ENCODE measurements at regions of chr14 and their contacts with region 1.

Region 1: GRCh38 chr14:90235179-90235976 is 21.0 kb upstream of the PSMC1 start:
- DNase-seq: peak; percentile 80
- H3K4me3 ChIP-seq: no peak overlapping the region
- H3K27ac ChIP-seq: no peak overlapping the region
- H3K4me1 ChIP-seq: no peaks in the 10 kb centered on the region
- H3K27me3 ChIP-seq: peaks cover 3 to 4% of the 10 kb centered on the region in 2 experiments
- CTCF ChIP-seq: peak; percentile 84 to 89
- POLR2A ChIP-seq: no peak

Region 2: GRCh38 chr14:89027097-89027740 is 1208.2 kb before region 1 on chr14:
- CTCF ChIA-PET with region 1: interaction called, 3 read pairs
- POLR2A ChIA-PET with region 1: no interaction called
- dilution Hi-C with region 1: no loop called
- intact Hi-C with region 1: loop called (anchors 2 kb)
- DNase-seq: peak; percentile 25
- H3K4me3 ChIP-seq: peak overlapping the region; percentile 40 to 65 (median 56)
- H3K27ac ChIP-seq: no peak overlapping the region
- H3K4me1 ChIP-seq: peaks cover 9% of the 10 kb centered on the region
- H3K27me3 ChIP-seq: peaks cover 25 to 39% of the 10 kb centered on the region in 2 experiments
- CTCF ChIP-seq: peak; percentile 74 to 88
- POLR2A ChIP-seq: no peak

Region 3: DNA sequence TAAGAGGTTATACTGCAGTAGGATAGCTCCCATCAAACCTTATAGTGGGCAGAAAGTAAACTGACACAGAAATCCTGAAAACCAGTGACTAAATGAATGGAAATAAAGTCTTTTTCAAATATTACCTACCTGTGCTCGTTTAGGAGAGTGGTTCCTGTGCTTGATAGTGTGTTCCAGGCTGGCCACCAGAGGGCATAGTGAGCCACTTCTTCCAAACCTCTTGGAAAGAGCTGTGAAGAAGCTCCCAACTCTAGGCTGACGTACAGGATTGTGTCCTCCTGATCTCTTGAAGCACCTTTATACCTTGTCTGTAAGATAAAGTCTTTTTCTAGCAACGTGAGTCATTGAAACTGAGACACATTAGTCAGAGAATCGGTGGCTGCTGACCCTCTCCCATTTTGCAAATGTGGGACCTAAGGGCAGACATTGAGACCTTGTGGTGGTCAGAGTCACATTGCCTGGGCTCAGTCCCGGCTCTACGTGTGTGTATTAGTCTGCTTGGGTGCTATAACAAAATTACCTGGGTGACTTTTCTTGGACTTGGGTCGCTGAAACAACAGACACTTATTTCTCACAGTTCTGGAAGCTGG is 262.0 kb before region 1 on chr14:
- CTCF ChIA-PET with region 1: interaction called, 294 read pairs
- POLR2A ChIA-PET with region 1: no interaction called
- dilution Hi-C with region 1: no loop called
- intact Hi-C with region 1: loop called (anchors 1 kb)
- DNase-seq: peak; percentile 67
- H3K4me3 ChIP-seq: no peak overlapping the region
- H3K27ac ChIP-seq: no peak overlapping the region
- H3K4me1 ChIP-seq: no peaks in the 10 kb centered on the region
- H3K27me3 ChIP-seq: no peaks in the 10 kb centered on the region
- CTCF ChIP-seq: peak; percentile 79 to 83
- POLR2A ChIP-seq: no peak

Region 4: DNA sequence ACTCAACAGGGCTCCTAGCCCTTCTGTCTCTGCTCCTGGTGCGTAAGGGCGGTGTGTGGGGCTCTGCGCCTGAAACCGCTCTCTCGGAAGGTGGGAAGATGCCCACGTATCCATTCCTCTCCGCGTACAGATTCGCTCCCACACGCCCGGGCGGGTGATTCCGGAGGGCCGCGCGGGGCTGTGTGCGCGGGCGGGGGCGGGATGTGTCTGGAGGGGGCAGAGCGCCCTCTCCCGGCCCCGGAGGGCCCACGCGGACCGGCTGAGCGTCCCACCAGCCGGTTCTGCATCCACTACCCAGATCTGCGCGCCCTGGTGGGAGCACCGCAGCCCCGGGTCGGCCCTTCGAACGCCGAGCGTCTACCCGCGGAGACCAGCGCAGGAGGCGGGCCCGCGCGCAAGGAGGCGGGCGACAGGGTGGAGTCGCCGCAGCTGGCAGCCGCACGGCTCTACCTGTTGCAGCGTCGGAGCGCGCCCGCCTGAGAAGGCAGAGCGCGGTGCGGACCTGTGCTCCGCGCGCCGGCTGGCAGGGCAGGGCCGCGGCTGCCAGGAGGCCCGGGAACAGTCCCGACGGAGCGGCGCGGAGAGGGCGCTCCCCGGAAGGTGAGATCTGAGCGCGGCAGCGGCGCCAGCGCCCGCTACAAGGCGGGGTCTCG is 174.9 kb before region 1 on chr14:
- CTCF ChIA-PET with region 1: interaction called, 22 read pairs
- POLR2A ChIA-PET with region 1: no interaction called
- dilution Hi-C with region 1: no loop called
- intact Hi-C with region 1: loop called (anchors 1 kb)
- DNase-seq: peak; percentile 54
- H3K4me3 ChIP-seq: peak overlapping the region; percentile 20 to 53 (median 46)
- H3K27ac ChIP-seq: no peak overlapping the region
- H3K4me1 ChIP-seq: peaks cover 27% of the 10 kb centered on the region
- H3K27me3 ChIP-seq: peaks cover 51 to 75% of the 10 kb centered on the region in 2 experiments
- CTCF ChIP-seq: peak; percentile 52 to 72
- POLR2A ChIP-seq: no peak

Region 5: DNA sequence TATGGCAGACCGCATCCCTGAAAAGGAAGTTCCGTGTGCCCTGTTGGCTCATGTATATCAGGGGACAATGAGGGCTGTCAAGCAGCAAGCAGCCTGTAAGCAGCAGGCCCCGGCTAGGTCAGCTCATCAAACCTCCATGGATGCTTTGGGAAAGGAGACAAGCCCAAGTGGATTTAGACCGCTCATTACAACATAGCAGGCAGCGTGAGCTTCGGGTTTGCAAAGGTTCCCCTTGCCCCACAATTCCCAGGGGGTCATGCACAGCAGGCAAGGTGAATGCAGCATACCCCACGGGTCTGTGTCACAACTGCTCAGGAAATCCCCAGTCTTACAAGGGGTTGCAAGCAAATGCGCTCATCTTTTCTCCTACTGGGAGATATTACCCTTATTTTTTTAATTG is 118.9 kb before region 1 on chr14:
- CTCF ChIA-PET with region 1: interaction called, 21 read pairs
- POLR2A ChIA-PET with region 1: no interaction called
- dilution Hi-C with region 1: no loop called
- intact Hi-C with region 1: loop called (anchors 1 kb)
- DNase-seq: no peak
- H3K4me3 ChIP-seq: no peak overlapping the region
- H3K27ac ChIP-seq: no peak overlapping the region
- H3K4me1 ChIP-seq: no peaks in the 10 kb centered on the region
- H3K27me3 ChIP-seq: peaks cover 4 to 9% of the 10 kb centered on the region in 2 experiments
- CTCF ChIP-seq: no peak
- POLR2A ChIP-seq: no peak

Region 6: GRCh38 chr14:90193925-90194324 is 41.5 kb before region 1 on chr14:
- CTCF ChIA-PET with region 1: interaction called, 3 read pairs
- POLR2A ChIA-PET with region 1: no interaction called
- dilution Hi-C with region 1: no loop called
- intact Hi-C with region 1: loop called (anchors 1 kb)
- DNase-seq: no peak
- H3K4me3 ChIP-seq: no peak overlapping the region
- H3K27ac ChIP-seq: no peak overlapping the region
- H3K4me1 ChIP-seq: no peaks in the 10 kb centered on the region
- H3K27me3 ChIP-seq: peaks cover 0 to 4% of the 10 kb centered on the region in 2 experiments
- CTCF ChIP-seq: peak; percentile 26 to 29
- POLR2A ChIP-seq: no peak

Region 7: DNA sequence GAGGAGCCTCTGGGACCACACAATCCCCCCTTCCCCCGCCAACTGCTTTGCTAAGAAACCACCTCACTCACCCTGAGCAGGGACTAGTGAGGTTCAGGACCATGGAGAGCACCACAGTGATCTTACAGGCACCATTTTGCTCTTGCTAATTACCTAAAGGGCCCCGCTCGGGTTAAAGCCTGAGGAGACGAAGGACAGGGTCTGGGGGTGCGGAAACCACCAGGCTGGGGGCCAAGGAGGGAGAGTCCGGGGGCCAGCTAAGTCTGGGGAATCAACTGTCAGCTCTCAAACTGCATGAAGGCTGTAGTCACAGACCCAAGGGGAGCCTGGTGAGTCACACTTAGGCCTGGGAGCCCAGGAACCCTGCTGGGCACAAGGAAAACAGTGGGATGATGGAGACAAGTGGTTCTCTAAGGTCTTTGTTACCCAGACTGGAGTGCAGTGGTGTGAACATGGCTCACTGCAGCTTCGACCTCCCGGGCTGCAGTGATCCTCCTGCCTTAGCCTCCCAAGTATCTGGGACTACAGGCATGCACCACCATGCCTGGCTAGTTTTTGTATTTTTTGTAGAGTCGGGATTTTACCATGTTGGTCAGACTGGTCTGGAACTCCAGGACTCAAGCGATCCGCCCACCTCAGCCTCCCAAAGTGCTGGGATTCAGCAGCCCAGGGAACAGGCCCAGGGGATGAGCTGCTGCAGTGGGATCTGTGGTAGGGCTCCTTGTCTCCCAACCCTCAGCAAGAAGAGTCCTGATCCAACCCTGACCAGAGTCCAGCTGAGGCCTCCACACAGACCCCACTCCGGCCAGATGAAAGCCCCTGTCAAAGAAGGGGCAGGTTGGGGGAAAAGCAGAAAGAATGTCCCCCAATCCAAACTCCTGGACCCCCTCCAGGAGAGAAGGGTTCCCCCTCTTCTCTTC is 260.2 kb after region 1 on chr14:
- CTCF ChIA-PET with region 1: no interaction called
- POLR2A ChIA-PET with region 1: no interaction called
- dilution Hi-C with region 1: no loop called
- intact Hi-C with region 1: no loop called
- DNase-seq: peak; percentile 52
- H3K4me3 ChIP-seq: no peak overlapping the region
- H3K27ac ChIP-seq: no peak overlapping the region
- H3K4me1 ChIP-seq: no peaks in the 10 kb centered on the region
- H3K27me3 ChIP-seq: no peaks in the 10 kb centered on the region
- CTCF ChIP-seq: no peak
- POLR2A ChIP-seq: no peak

Region 8: GRCh38 chr14:90970167-90970600 is 734.8 kb after region 1 on chr14:
- CTCF ChIA-PET with region 1: no interaction called
- POLR2A ChIA-PET with region 1: no interaction called
- dilution Hi-C with region 1: no loop called
- intact Hi-C with region 1: no loop called
- DNase-seq: peak; percentile 58
- H3K4me3 ChIP-seq: no peak overlapping the region
- H3K27ac ChIP-seq: no peak overlapping the region
- H3K4me1 ChIP-seq: peaks cover 12% of the 10 kb centered on the region
- H3K27me3 ChIP-seq: no peaks in the 10 kb centered on the region
- CTCF ChIP-seq: no peak
- POLR2A ChIP-seq: no peak